Activated naive CD4-positive, alpha-beta T cell treated with anti-CD3 and anti-CD28 coated beads for 36 hours (primary cell): ENCODE measurements at regions of chr1 and their contacts with region 1.

Region 1: GRCh38 chr1:205121660-205122488 is at the start of gene RBBP5:
- DNase-seq: peak; percentile 98
- H3K4me3 Mint-ChIP-seq: peak within 1 kb of the TSS; percentile 93
- H3K27ac Mint-ChIP-seq: peak within 1 kb of the TSS; percentile 98
- H3K4me1 Mint-ChIP-seq: peaks cover 32% of the 10 kb centered on the region
- H3K27me3 Mint-ChIP-seq: no peaks in the 10 kb centered on the region
- total RNA-seq, gene RBBP5: 26.0 to 27.5 TPM

Region 2: DNA sequence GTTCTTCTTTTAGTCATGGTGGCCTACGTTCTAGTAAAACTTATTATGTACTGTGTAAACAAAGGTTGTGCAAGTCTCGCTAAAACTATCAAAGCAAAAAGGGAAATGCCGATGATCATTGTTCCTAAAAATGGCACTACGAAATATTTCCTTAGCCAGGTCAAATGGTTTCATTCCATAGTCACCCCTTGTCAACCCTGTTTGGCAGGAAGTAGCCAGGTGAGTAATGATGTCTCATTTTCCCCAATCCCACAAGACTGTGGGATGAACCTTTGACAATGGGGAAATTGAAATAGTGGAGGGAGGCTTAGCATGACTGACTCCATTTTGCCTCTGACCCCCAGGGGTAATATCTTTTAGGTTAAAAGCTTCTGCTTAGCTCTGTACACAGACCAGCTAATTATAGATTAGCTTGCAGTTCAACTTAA is 950.1 kb before region 1 on chr1:
- CTCF ChIA-PET with region 1: no interaction called
- intact Hi-C with region 1: no loop called
- DNase-seq: no peak
- H3K4me3 Mint-ChIP-seq: no peak overlapping the region
- H3K27ac Mint-ChIP-seq: no peak overlapping the region
- H3K4me1 Mint-ChIP-seq: no peaks in the 10 kb centered on the region
- H3K27me3 Mint-ChIP-seq: peaks cover 4% of the 10 kb centered on the region

Region 3: DNA sequence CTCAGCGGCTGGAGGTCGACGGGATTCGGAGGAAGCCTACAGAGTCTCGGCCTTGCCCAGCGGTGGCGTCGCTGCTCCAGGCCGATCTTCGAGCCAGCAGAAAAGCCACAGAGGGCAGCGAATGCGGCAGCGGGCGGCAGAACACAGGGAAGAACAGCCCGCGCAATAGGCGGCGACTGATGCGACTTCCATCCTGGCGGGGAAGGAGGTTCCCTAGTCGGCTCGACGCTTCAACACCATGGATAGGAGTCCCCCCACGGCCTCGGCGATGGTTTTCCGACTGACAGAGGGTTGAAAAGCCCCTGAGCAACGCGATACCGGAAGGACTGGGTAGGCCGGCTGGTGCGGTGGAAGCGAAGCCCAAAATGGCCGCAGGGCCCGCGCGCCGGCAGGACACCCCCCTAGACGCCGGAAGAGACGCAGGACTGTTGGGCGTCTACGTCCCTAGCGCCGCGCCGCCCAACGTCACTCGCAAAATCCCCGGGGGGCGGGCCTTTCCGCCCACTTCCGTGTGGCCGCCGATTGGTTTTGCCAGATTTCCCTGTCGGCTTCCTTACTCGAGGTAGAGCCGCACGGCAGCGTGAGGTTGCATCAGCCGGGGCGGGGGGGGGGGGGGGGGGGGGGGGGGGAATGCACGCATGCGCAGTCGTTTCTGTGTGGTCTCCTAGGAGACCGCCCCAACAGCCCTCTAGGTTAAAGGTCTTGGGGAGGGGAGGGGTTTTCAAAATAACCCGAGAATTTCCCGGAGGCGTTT is 710.2 kb before region 1 on chr1 and contains the start of gene PPP1R15B:
- CTCF ChIA-PET with region 1: no interaction called
- intact Hi-C with region 1: loop called (anchors 5 kb)
- DNase-seq: peak; percentile 97
- H3K4me3 Mint-ChIP-seq: peak within 1 kb of the TSS; percentile 99
- H3K27ac Mint-ChIP-seq: peak within 1 kb of the TSS; percentile 99
- H3K4me1 Mint-ChIP-seq: peaks cover 8% of the 10 kb centered on the region
- H3K27me3 Mint-ChIP-seq: no peaks in the 10 kb centered on the region
- total RNA-seq, gene PPP1R15B: 63.7 to 65.6 TPM

Region 4: DNA sequence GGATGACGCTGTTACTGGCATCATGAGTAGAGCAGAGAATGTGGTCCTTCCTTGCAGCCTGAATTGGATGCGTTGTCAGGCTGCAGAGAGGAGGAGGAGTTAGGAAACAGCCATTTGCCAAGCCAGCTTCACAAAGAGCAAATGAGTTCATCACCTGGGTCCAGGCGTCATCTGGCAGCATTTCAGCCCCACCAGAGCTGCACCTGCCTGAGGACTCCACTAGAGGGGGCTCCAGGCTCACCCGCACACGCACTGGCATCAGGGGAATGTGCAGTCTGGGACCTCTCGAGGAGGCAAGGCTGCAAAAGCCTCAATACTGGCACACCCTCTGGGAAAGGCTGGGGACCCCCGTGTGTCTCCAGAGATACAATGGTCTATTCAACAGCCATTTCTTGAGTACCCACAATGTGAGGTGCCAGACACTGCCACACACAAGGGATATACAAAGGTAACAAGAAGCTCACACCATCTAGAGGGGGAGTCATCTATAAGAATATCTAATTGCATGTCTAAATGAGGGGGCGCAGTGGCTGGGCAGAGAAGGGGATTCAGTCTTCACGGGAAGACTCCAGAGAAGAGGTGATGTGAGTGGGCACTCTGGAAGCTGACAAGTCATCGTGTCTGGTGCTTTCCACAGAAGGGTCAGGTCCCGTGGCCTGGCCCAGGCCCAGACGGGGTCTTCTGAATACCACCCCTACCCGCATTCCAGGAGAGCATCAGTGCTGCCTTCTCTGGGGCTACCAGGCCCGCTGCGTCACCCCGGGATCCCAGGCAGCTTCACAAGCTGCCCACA is 132.4 kb before region 1 on chr1:
- CTCF ChIA-PET with region 1: interaction called, 4 read pairs
- intact Hi-C with region 1: loop called (anchors 5 kb)
- DNase-seq: peak; percentile 82
- H3K4me3 Mint-ChIP-seq: no peak overlapping the region
- H3K27ac Mint-ChIP-seq: no peak overlapping the region
- H3K4me1 Mint-ChIP-seq: peaks cover 12% of the 10 kb centered on the region
- H3K27me3 Mint-ChIP-seq: no peaks in the 10 kb centered on the region

Region 5: GRCh38 chr1:205172729-205173366 is 51.0 kb after region 1 on chr1:
- CTCF ChIA-PET with region 1: no interaction called
- intact Hi-C with region 1: loop called (anchors 2 kb)
- DNase-seq: no peak
- H3K4me3 Mint-ChIP-seq: no peak overlapping the region
- H3K27ac Mint-ChIP-seq: peak overlapping the region; percentile 74
- H3K4me1 Mint-ChIP-seq: peaks cover 31% of the 10 kb centered on the region
- H3K27me3 Mint-ChIP-seq: no peaks in the 10 kb centered on the region

Region 6: GRCh38 chr1:205211169-205211838 is 89.4 kb after region 1 on chr1 and contains the start of gene DSTYK:
- CTCF ChIA-PET with region 1: no interaction called
- intact Hi-C with region 1: loop called (anchors 1 kb)
- DNase-seq: peak; percentile 97
- H3K4me3 Mint-ChIP-seq: peak within 1 kb of the TSS; percentile 93
- H3K27ac Mint-ChIP-seq: peak within 1 kb of the TSS; percentile 95
- H3K4me1 Mint-ChIP-seq: peaks cover 57% of the 10 kb centered on the region
- H3K27me3 Mint-ChIP-seq: no peaks in the 10 kb centered on the region
- total RNA-seq, gene DSTYK: 10.9 to 11.5 TPM

Region 7: GRCh38 chr1:205255941-205256780 is 134.3 kb after region 1 on chr1:
- CTCF ChIA-PET with region 1: interaction called, 6 read pairs
- intact Hi-C with region 1: loop called (anchors 1 kb)
- DNase-seq: peak; percentile 93
- H3K4me3 Mint-ChIP-seq: no peak overlapping the region
- H3K27ac Mint-ChIP-seq: peak overlapping the region; percentile 42
- H3K4me1 Mint-ChIP-seq: peaks cover 25% of the 10 kb centered on the region
- H3K27me3 Mint-ChIP-seq: no peaks in the 10 kb centered on the region

Region 8: DNA sequence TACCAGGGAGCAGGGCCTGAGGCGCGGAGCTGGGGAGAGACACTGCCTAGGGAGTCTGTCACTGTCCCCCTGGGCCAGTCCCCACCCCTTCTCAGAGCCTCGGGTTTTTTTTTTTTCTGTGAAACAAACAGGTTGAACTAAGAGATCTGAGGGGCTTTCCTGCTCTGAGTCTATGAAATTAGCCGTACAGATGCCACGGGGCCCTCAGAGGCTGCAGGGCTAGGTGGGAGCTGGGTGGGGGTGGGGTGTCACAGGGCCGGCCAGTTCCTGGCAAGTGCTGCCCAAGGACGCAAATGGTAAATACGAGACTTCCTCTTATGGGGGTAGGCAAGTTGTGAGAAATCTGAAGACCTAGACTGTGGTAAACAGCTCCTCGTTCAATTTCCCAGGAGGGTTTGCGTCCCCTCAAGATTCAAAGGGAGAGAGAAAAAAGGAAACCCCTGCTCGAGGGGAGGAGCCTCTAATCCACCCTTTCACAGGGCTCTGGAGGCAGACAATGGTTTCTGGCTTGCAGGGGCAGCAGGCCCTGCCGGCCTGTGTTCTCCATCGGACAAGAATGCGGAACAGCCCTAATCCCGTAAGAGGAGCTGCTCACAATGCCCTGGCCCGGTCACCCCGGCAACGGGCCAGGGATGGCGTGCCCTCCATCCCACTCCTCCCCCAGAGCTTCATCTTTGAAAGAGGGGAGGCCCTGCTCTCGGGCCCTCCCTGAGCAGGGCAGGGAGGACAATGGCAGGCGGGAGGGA is 191.9 kb after region 1 on chr1:
- CTCF ChIA-PET with region 1: no interaction called
- intact Hi-C with region 1: loop called (anchors 1 kb)
- DNase-seq: peak; percentile 77
- H3K4me3 Mint-ChIP-seq: peak overlapping the region; percentile 80
- H3K27ac Mint-ChIP-seq: peak overlapping the region; percentile 93
- H3K4me1 Mint-ChIP-seq: peaks cover 85% of the 10 kb centered on the region
- H3K27me3 Mint-ChIP-seq: no peaks in the 10 kb centered on the region

Region 9: GRCh38 chr1:205668951-205669340 is 547.1 kb after region 1 on chr1:
- CTCF ChIA-PET with region 1: no interaction called
- intact Hi-C with region 1: no loop called
- DNase-seq: no peak
- H3K4me3 Mint-ChIP-seq: no peak overlapping the region
- H3K27ac Mint-ChIP-seq: no peak overlapping the region
- H3K4me1 Mint-ChIP-seq: no peaks in the 10 kb centered on the region
- H3K27me3 Mint-ChIP-seq: peaks cover 15% of the 10 kb centered on the region